H1 (cell line): ENCODE measurements at regions of chr13 and their contacts with region 1.

Region 1: GRCh38 chr13:48000778-48001628 is at the start of gene SUCLA2:
- DNase-seq: peak; percentile 81 to 95
- H3K4me3 ChIP-seq: peak within 1 kb of the TSS; percentile 95 to 97 (median 96)
- H3K27ac ChIP-seq: peak within 1 kb of the TSS; percentile 71
- H3K4me1 ChIP-seq: peaks cover 0 to 4% (median 0%) of the 10 kb centered on the region in 4 experiments; a peak in 3 of 7 replicates
- H3K27me3 ChIP-seq: no peaks in the 10 kb centered on the region
- CTCF ChIP-seq: no peak
- EP300 ChIP-seq: no peak
- POLR2A ChIP-seq: peak; percentile 57 to 86
- RAD21 ChIP-seq: peak in 1 of 2 experiments; percentile 6; a peak in 1 of 4 replicates
- total RNA-seq, gene SUCLA2: 69.1 and 78.8 TPM in 2 replicates

Region 2: GRCh38 chr13:47788844-47789243 is 212.2 kb before region 1 on chr13:
- CTCF ChIA-PET with region 1: no interaction called
- POLR2A ChIA-PET with region 1: no interaction called
- DNase-seq: no peak
- H3K4me3 ChIP-seq: no peak overlapping the region
- H3K27ac ChIP-seq: no peak overlapping the region
- H3K4me1 ChIP-seq: no peaks in the 10 kb centered on the region
- H3K27me3 ChIP-seq: no peaks in the 10 kb centered on the region
- CTCF ChIP-seq: no peak
- EP300 ChIP-seq: no peak
- POLR2A ChIP-seq: no peak
- RAD21 ChIP-seq: no peak

Region 3: GRCh38 chr13:47983070-47983469 is 17.9 kb before region 1 on chr13:
- CTCF ChIA-PET with region 1: interaction called, 3 read pairs
- POLR2A ChIA-PET with region 1: interaction called, 10 read pairs
- DNase-seq: no peak
- H3K4me3 ChIP-seq: no peak overlapping the region
- H3K27ac ChIP-seq: no peak overlapping the region
- H3K4me1 ChIP-seq: no peaks in the 10 kb centered on the region
- H3K27me3 ChIP-seq: no peaks in the 10 kb centered on the region
- CTCF ChIP-seq: no peak
- EP300 ChIP-seq: no peak
- POLR2A ChIP-seq: no peak
- RAD21 ChIP-seq: no peak

Region 4: GRCh38 chr13:48014359-48014758 is 13.4 kb after region 1 on chr13:
- CTCF ChIA-PET with region 1: interaction called, 3 read pairs
- POLR2A ChIA-PET with region 1: interaction called, 11 read pairs
- DNase-seq: no peak
- H3K4me3 ChIP-seq: no peak overlapping the region
- H3K27ac ChIP-seq: no peak overlapping the region
- H3K4me1 ChIP-seq: peaks cover 0 to 2% (median 1%) of the 10 kb centered on the region in 4 experiments; a peak in 2 of 7 replicates
- H3K27me3 ChIP-seq: no peaks in the 10 kb centered on the region
- CTCF ChIP-seq: no peak
- EP300 ChIP-seq: no peak
- POLR2A ChIP-seq: no peak
- RAD21 ChIP-seq: no peak

Region 5: DNA sequence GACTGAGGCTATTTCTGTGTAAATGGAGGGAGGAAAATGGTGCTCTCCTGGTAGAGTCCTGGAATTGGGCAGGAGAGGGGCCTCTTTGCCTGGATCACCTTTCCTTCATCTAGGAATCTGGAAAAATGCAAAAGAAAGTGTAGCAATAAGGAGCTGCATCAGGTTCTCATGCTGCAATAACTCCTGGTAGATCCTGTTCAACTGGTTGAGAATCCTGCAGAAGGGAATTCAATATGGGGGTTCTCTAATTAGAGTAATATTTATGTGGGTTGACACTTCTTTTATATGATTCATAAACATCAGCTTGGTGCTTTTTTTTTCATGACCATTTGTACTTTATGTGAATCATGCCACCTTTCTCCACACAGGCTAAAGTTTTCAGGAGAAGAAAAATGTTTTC is 27.0 kb after region 1 on chr13:
- CTCF ChIA-PET with region 1: no interaction called
- POLR2A ChIA-PET with region 1: no interaction called
- DNase-seq: no peak
- H3K4me3 ChIP-seq: no peak overlapping the region
- H3K27ac ChIP-seq: no peak overlapping the region
- H3K4me1 ChIP-seq: no peaks in the 10 kb centered on the region
- H3K27me3 ChIP-seq: no peaks in the 10 kb centered on the region
- CTCF ChIP-seq: no peak
- EP300 ChIP-seq: no peak
- POLR2A ChIP-seq: no peak
- RAD21 ChIP-seq: no peak